ENCODE measurements at regions of chr6 and their contacts with region 1.

Region 1: DNA sequence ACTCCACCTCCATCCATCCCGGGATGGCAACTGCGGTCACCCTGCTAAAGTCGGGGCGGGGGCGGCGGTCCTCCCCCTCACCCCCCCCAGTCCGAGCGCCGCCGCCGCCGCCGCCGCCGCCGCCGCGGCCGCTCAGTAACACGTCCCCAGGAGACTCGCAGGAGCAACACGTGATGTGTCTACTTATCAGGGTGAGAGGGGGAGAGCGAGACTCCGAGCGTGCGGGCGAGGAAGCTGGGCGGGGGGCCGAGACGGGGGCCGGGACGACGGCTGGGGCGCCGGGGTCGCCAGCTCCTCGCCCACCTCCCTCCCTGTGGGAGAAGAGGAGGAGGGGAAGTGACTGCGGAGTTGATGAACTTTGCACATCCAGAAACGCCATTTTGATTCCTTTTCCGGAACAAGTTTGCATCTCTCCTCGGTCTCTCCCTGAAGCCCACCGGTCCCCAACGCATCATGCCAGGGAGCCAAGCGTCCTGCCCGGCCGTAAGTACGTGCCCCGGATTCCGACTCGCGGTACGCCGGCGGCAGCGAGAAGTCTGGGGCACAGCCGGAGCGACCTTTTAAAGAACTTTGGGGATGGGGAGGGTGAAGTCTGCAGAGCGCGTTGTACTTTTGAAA is at the start of gene RREB1:
- DNase-seq: peak; percentile 75
- ATAC-seq: peak; percentile 69
- H3K4me3 Mint-ChIP-seq: peak within 1 kb of the TSS; percentile 94
- H3K27ac Mint-ChIP-seq: peak within 1 kb of the TSS; percentile 92
- H3K4me1 Mint-ChIP-seq: peaks cover 37% of the 10 kb centered on the region
- H3K27me3 Mint-ChIP-seq: no peaks in the 10 kb centered on the region
- total RNA-seq, gene RREB1: 20.6 to 24.6 TPM

Region 2: DNA sequence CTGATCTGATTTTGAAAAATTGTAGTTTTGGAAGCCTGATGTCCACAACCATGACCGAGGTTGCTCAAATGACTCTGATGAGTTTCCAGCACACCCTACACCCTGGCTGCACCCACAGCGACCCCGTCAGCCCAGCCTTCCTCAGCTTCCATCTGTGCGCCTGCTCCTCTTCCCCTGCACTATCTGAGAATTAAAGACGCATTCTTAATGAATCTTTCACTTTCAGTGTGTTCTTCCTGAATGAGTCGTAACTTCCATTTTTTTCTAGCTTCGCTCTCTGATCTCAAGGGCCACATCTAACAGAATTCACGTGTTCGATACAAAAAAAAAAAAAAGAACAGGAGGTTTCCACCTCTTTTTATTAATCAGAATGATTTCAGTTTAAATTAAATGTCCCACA is 21.2 kb before region 1 on chr6:
- CTCF ChIA-PET with region 1: interaction called, 12 read pairs
- DNase-seq: peak; percentile 44
- ATAC-seq: peak; percentile 56
- H3K4me3 Mint-ChIP-seq: peak overlapping the region; percentile 56
- H3K27ac Mint-ChIP-seq: peak overlapping the region; percentile 13
- H3K4me1 Mint-ChIP-seq: peaks cover 25% of the 10 kb centered on the region
- H3K27me3 Mint-ChIP-seq: peaks cover 56% of the 10 kb centered on the region

Region 3: DNA sequence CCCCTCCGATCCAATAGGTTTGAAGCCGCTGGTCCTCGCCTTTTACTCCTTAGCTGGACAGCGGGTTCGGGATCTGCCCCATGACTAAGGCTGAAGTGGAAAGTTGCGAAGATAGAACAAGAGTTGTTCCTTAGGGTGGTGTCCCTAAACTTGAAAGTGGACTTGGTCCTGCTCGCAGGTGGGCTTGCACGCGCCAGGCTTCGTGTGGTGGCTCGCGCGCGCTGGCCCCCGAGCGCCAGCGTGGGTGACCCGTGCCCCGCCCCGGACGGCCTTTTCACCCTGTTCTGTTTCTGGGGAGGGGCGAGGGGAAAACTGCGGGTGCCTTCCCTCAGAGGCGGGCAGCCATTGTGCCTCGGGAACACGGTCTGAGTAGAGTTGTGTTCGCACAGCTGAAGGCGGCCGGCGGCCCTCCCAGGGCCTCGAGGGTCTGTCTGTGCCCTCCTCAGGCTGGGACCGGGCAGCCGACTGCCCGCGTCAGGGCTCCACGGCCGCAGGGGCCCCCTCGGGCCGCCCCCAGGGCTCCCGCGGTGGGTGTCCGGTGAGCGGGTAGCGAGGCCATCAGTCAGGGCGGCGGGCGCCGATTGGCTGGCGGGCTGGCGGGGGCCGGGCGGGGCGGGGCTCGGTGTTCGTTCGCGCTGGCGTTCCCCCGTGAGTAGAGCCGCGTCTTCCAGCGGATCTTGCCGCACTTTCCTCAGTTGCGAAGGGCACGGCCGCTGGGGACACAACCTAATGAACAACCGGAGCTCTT is 33.1 kb after region 1 on chr6:
- CTCF ChIA-PET with region 1: interaction called, 28 read pairs
- DNase-seq: peak; percentile 84
- ATAC-seq: peak; percentile 90
- H3K4me3 Mint-ChIP-seq: peak overlapping the region; percentile 72
- H3K27ac Mint-ChIP-seq: peak overlapping the region; percentile 77
- H3K4me1 Mint-ChIP-seq: peaks cover 61% of the 10 kb centered on the region
- H3K27me3 Mint-ChIP-seq: no peaks in the 10 kb centered on the region